Lower lobe of right lung (tissue), 2 donors: ENCODE measurements at regions of chr9 and their contacts with region 1.

Region 1: GRCh38 chr9:15422372-15423230 is at the start of gene SNAPC3:
- DNase-seq: peak; percentile 97
- ATAC-seq: peak; percentile 100
- H3K4me3 ChIP-seq: peak within 1 kb of the TSS; percentile 99
- H3K27ac ChIP-seq: peak within 1 kb of the TSS; percentile 96
- H3K4me1 ChIP-seq: peaks cover 48% of the 10 kb centered on the region
- H3K27me3 ChIP-seq: no peaks in the 10 kb centered on the region
- CTCF ChIP-seq: no peak
- total RNA-seq, gene SNAPC3: 30.7 TPM

Region 2: GRCh38 chr9:15211160-15211814 is 211.3 kb before region 1 on chr9:
- intact Hi-C with region 1: loop called (anchors 10 kb)
- DNase-seq: no peak
- ATAC-seq: peak; percentile 87 to 89
- H3K4me3 ChIP-seq: no peak overlapping the region
- H3K27ac ChIP-seq: peak overlapping the region; percentile 69
- H3K4me1 ChIP-seq: peaks cover 14% of the 10 kb centered on the region
- H3K27me3 ChIP-seq: no peaks in the 10 kb centered on the region
- CTCF ChIP-seq: peak; percentile 92